ENCODE measurements at regions of chr2 and their contacts with region 1.

Region 1: GRCh38 chr2:71798266-71799012 is 345.1 kb downstream of the DYSF start:
- H3K4me3 ChIP-seq: no peak overlapping the region
- H3K27ac ChIP-seq: no peak overlapping the region
- H3K4me1 ChIP-seq: no peaks in the 10 kb centered on the region
- CTCF ChIP-seq: peak; percentile 47; the same call in 1 of the 2 replicates

Region 2: GRCh38 chr2:71545572-71546274 is 252.7 kb before region 1 on chr2:
- CTCF ChIA-PET with region 1: interaction called, 24 read pairs
- POLR2A ChIA-PET with region 1: no interaction called
- H3K4me3 ChIP-seq: no peak overlapping the region
- H3K27ac ChIP-seq: no peak overlapping the region
- H3K4me1 ChIP-seq: no peaks in the 10 kb centered on the region
- CTCF ChIP-seq: peak; percentile 78

Region 3: GRCh38 chr2:71550801-71551630 is 247.4 kb before region 1 on chr2:
- CTCF ChIA-PET with region 1: interaction called, 24 read pairs
- POLR2A ChIA-PET with region 1: no interaction called
- H3K4me3 ChIP-seq: no peak overlapping the region
- H3K27ac ChIP-seq: no peak overlapping the region
- H3K4me1 ChIP-seq: no peaks in the 10 kb centered on the region
- CTCF ChIP-seq: no peak

Region 4: GRCh38 chr2:71776227-71776626 is 22.2 kb before region 1 on chr2:
- CTCF ChIA-PET with region 1: interaction called, 11 read pairs
- POLR2A ChIA-PET with region 1: no interaction called
- H3K4me3 ChIP-seq: no peak overlapping the region
- H3K27ac ChIP-seq: no peak overlapping the region
- H3K4me1 ChIP-seq: no peaks in the 10 kb centered on the region
- CTCF ChIP-seq: no peak

Region 5: GRCh38 chr2:71784734-71785473 is 13.5 kb before region 1 on chr2:
- CTCF ChIA-PET with region 1: interaction called, 41 read pairs
- POLR2A ChIA-PET with region 1: no interaction called
- H3K4me3 ChIP-seq: no peak overlapping the region
- H3K27ac ChIP-seq: no peak overlapping the region
- H3K4me1 ChIP-seq: no peaks in the 10 kb centered on the region
- CTCF ChIP-seq: no peak

Region 6: GRCh38 chr2:71813807-71814470 is 15.5 kb after region 1 on chr2:
- CTCF ChIA-PET with region 1: interaction called, 20 read pairs
- POLR2A ChIA-PET with region 1: no interaction called
- H3K4me3 ChIP-seq: no peak overlapping the region
- H3K27ac ChIP-seq: no peak overlapping the region
- H3K4me1 ChIP-seq: no peaks in the 10 kb centered on the region
- CTCF ChIP-seq: no peak

Measured in HEK293 (cell line).